ENCODE measurements at regions of chr17 and their contacts with region 1.

Region 1: GRCh38 chr17:76843703-76844484 is 24.3 kb upstream of the MGAT5B start:
- DNase-seq: no peak
- H3K4me3 ChIP-seq: no peak overlapping the region
- H3K27ac ChIP-seq: no peak overlapping the region
- H3K4me1 ChIP-seq: peaks cover 4% of the 10 kb centered on the region
- H3K27me3 ChIP-seq: no peaks in the 10 kb centered on the region
- CTCF ChIP-seq: no peak
- EP300 ChIP-seq: no peak
- POLR2A ChIP-seq: no peak

Region 2: DNA sequence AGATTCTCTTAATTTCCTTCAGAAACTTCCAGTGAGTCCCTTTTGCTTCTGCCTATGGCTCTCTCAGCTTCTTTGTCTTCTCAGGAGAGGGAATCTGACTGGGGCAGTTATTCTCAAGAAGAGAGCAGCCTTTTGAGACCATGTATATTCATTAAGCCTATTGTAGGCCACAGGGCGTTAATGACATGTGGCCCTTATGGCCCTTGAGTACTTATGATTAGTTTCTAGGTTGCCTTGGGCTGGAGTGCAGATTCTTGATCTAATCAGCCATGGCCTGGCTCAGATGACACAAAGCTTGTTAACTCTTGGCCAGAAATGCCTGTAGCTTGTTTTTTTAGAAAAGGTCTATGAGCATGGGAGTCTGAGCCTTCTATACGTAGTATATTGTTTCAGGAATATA is 88.6 kb before region 1 on chr17:
- intact Hi-C with region 1: loop called in 1 of 4 experiments (anchors 5 kb)
- DNase-seq: no peak
- H3K4me3 ChIP-seq: no peak overlapping the region
- H3K27ac ChIP-seq: no peak overlapping the region
- H3K4me1 ChIP-seq: no peaks in the 10 kb centered on the region
- H3K27me3 ChIP-seq: no peaks in the 10 kb centered on the region
- CTCF ChIP-seq: no peak
- EP300 ChIP-seq: no peak
- POLR2A ChIP-seq: no peak

Region 3: GRCh38 chr17:76901542-76902197 is 57.8 kb after region 1 on chr17:
- intact Hi-C with region 1: no loop called
- DNase-seq: no peak
- H3K4me3 ChIP-seq: no peak overlapping the region
- H3K27ac ChIP-seq: no peak overlapping the region
- H3K4me1 ChIP-seq: no peaks in the 10 kb centered on the region
- H3K27me3 ChIP-seq: no peaks in the 10 kb centered on the region
- CTCF ChIP-seq: no peak
- EP300 ChIP-seq: no peak
- POLR2A ChIP-seq: no peak